ENCODE measurements at regions of chr3 and their contacts with region 1.

Region 1: DNA sequence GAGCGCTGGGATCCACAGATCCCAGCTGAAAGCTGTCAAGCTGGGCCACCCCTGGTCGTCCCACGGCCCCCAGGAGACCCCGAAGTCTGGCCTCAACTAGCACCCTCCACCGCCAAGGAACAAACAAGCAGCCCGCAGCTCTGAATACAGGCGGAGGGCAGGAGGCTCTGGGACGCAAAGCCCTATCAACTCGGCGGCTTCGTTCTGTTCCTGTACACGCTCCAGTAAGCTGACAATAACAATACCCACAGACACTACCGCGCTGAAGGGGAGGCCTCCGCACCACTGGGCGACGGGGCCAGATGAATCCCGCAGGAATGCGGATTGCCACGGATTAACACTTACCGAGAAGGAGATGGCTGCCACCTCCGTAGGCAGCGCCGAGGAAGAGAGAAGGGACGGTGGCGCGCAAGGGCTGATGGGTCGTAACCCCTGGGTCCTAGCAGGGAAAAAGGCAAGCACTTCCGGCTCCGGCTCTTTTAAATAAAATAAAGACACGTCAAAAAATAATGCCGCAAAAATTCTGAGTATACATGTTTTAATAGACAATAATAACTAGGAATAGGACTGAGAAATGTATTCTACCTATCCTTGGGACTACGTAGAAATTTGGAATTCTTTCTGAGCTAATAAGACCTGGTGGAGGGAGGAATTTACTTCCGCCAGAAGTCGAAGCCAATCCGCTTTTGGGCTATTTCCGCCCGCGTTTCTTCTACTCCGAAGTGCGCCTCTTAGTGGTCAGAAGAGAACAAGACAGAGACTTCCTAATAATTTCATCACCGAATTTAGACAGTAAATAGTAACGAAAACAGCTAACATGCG is at the start of gene RPL32:
- DNase-seq: peak; percentile 90
- H3K4me3 Mint-ChIP-seq: peak within 1 kb of the TSS; percentile 96
- H3K27ac Mint-ChIP-seq: peak within 1 kb of the TSS; percentile 99
- H3K4me1 Mint-ChIP-seq: peaks cover 48% of the 10 kb centered on the region
- H3K27me3 Mint-ChIP-seq: no peaks in the 10 kb centered on the region
- total RNA-seq, gene RPL32: 3,385 to 3,704 TPM

Region 2: DNA sequence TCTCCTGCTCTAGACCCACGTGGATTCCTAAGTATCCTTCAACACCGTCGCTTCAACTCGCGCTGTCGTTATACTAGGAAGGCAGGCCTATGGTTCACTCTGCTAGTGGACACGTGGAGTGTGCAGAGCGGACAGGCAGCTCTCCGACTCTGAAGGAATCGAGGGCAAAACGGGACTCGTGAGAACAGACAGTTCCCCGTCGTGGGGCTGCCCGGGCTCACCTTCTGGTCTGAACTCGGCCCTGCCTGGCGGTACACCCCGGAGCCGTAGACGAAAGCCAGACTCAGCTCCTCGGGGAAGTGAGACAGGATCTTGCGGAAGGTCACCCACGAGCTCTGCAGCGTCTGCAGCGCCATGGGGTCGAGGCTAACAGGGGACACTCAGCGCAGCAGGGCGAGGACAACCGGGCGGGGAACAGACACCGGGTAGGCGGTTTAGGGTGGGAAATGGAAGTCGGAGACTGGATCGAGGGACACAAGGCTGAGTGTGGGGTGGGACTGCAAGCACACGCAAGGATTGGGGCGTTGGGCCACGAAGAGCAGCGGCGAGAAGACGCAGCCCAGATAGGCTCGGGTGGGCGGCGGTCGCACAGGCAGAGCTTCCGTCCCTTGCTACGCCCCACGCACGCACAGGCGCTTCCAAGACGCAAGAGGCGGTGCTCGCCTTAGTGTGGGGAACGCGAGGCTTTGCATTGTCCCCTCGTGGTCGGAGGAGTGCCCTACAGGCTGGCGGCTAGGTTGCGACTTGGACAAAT is 994.9 kb before region 1 on chr3 and contains the start of gene TAMM41:
- CTCF ChIA-PET with region 1: no interaction called
- intact Hi-C with region 1: loop called (anchors 5 kb)
- DNase-seq: peak; percentile 95
- H3K4me3 Mint-ChIP-seq: peak within 1 kb of the TSS; percentile 97
- H3K27ac Mint-ChIP-seq: peak within 1 kb of the TSS; percentile 80
- H3K4me1 Mint-ChIP-seq: peaks cover 26% of the 10 kb centered on the region
- H3K27me3 Mint-ChIP-seq: no peaks in the 10 kb centered on the region
- total RNA-seq, gene TAMM41: 19.3 to 21.4 TPM

Region 3: GRCh38 chr3:12663936-12664908 is 177.1 kb before region 1 on chr3 and contains the start of gene RAF1:
- CTCF ChIA-PET with region 1: interaction called, 3 read pairs
- intact Hi-C with region 1: loop called (anchors 1 kb)
- DNase-seq: peak; percentile 98
- H3K4me3 Mint-ChIP-seq: peak within 1 kb of the TSS; percentile 82
- H3K27ac Mint-ChIP-seq: peak within 1 kb of the TSS; percentile 98
- H3K4me1 Mint-ChIP-seq: peaks cover 28% of the 10 kb centered on the region
- H3K27me3 Mint-ChIP-seq: no peaks in the 10 kb centered on the region
- total RNA-seq, gene RAF1: 62.5 to 68.5 TPM

Region 4: GRCh38 chr3:12771236-12771635 is 70.1 kb before region 1 on chr3:
- CTCF ChIA-PET with region 1: no interaction called
- intact Hi-C with region 1: no loop called
- DNase-seq: no peak
- H3K4me3 Mint-ChIP-seq: no peak overlapping the region
- H3K27ac Mint-ChIP-seq: no peak overlapping the region
- H3K4me1 Mint-ChIP-seq: peaks cover 7% of the 10 kb centered on the region
- H3K27me3 Mint-ChIP-seq: no peaks in the 10 kb centered on the region

Region 5: GRCh38 chr3:12782172-12782815 is 59.1 kb before region 1 on chr3:
- CTCF ChIA-PET with region 1: interaction called, 8 read pairs
- intact Hi-C with region 1: loop called (anchors 2 kb)
- DNase-seq: no peak
- H3K4me3 Mint-ChIP-seq: no peak overlapping the region
- H3K27ac Mint-ChIP-seq: no peak overlapping the region
- H3K4me1 Mint-ChIP-seq: no peaks in the 10 kb centered on the region
- H3K27me3 Mint-ChIP-seq: peaks cover 14% of the 10 kb centered on the region

Region 6: GRCh38 chr3:12830785-12831156 is 10.6 kb before region 1 on chr3:
- CTCF ChIA-PET with region 1: interaction called, 10 read pairs
- intact Hi-C with region 1: no loop called
- DNase-seq: no peak
- H3K4me3 Mint-ChIP-seq: no peak overlapping the region
- H3K27ac Mint-ChIP-seq: no peak overlapping the region
- H3K4me1 Mint-ChIP-seq: peaks cover 2% of the 10 kb centered on the region
- H3K27me3 Mint-ChIP-seq: no peaks in the 10 kb centered on the region

Region 7: DNA sequence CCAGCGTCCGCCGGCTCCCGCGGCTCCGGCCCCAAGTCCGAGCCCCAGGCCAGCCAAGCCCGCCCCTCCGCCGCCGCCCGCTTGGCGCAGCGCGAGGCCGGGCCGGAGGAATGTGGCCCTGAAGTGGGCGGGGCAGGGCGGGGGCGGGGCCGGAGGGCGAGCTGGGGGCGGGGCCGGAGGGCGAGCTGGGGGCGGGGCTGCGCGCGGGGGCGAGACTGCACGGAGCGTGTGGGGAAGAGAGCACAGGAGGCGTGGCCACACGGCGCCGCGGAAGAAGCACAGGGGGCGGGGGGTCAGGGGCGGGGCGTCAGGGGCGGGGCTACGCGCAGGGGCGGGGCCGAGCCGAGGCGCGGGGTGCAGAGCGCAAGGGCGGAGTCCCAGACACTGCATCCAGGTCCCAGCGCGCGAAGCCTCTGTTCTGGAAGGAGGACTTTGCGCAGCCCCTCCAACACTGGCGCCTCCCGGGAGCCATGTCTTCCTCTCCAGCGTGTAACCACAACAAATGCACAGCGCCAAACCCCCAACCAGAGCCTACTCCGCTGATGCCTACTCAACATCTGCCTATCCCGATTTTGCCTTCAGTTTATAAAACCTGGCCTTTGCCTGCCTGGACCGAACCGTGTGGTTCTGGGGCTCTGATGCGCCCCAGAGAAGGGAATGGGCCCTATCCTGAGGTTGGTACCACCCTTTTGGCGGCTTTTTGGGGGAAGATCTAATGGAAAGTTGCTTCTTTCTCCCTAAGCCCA is 126.4 kb after region 1 on chr3:
- CTCF ChIA-PET with region 1: no interaction called
- intact Hi-C with region 1: loop called (anchors 2 kb)
- DNase-seq: peak; percentile 89
- H3K4me3 Mint-ChIP-seq: peak overlapping the region; percentile 59
- H3K27ac Mint-ChIP-seq: no peak overlapping the region
- H3K4me1 Mint-ChIP-seq: peaks cover 51% of the 10 kb centered on the region
- H3K27me3 Mint-ChIP-seq: no peaks in the 10 kb centered on the region

Region 8: GRCh38 chr3:13069495-13069894 is 228.1 kb after region 1 on chr3:
- CTCF ChIA-PET with region 1: no interaction called
- intact Hi-C with region 1: loop called (anchors 10 kb)
- DNase-seq: peak; percentile 87
- H3K4me3 Mint-ChIP-seq: peak overlapping the region; percentile 49
- H3K27ac Mint-ChIP-seq: peak overlapping the region; percentile 88
- H3K4me1 Mint-ChIP-seq: peaks cover 26% of the 10 kb centered on the region
- H3K27me3 Mint-ChIP-seq: peaks cover 14% of the 10 kb centered on the region